Activated B cell treated with CpG ODN at 0.5 μM for 24 hours (primary cell): ENCODE measurements at regions of chr16 and their contacts with region 1.

Region 1: DNA sequence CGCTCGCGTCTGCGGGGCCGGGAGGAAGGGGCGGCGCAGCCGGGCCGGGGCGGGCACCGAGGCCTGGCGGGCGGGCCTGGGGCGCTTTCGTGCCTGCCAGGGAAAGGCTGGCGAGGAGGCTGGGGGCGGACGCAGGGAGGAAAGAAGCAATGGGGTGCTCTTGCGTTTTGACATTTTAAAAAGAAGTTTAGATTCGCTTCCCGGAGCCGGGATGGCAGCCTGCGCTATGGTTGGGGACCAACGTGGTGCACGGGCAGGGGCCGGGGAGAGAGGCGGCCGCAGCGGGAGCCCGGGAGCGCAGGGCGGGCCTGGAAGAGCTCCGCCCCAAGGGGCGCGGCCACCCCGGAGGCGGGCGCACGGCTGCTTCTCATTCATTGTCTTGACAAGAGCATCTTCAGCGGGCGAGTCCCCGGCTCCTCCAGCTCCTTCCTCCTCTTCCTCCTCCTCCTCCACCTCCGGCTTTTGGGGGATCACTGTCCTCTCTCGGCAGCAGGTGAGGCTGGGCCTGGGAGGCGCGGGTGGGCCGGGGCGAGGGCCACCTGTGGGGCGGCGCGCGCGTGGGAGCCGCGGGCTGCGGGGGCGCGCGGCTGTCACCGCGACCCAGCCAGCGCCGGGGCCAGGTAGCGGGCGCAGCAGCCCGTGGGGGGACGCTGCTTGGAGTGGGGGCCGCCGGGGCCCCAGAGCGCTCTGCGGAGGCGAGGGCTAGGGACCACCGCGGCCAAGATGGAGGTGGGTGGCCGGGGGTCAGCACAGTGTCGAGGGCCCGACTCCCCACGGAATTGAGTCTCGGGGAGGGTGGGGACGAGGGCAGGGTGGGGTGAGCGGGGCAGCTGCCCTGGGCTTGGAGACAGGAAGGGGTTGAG is at the start of gene CORO1A:
- DNase-seq: peak; percentile 86
- ATAC-seq: peak; percentile 60
- H3K4me3 Mint-ChIP-seq: peak within 1 kb of the TSS; percentile 98
- H3K27ac Mint-ChIP-seq: peak within 1 kb of the TSS; percentile 97
- H3K4me1 Mint-ChIP-seq: peaks cover 41% of the 10 kb centered on the region
- H3K27me3 Mint-ChIP-seq: no peaks in the 10 kb centered on the region
- CTCF ChIP-seq: no peak
- total RNA-seq, gene CORO1A: 1,030 and 1,060 TPM in 2 replicates

Region 2: GRCh38 chr16:30112197-30113030 is 71.0 kb before region 1 on chr16:
- CTCF ChIA-PET with region 1: interaction called, 3 read pairs
- POLR2A ChIA-PET with region 1: interaction called, 13 read pairs
- intact Hi-C with region 1: no loop called
- DNase-seq: peak; percentile 37
- ATAC-seq: peak; percentile 61
- H3K4me3 Mint-ChIP-seq: no peak overlapping the region
- H3K27ac Mint-ChIP-seq: no peak overlapping the region
- H3K4me1 Mint-ChIP-seq: peaks cover 5% of the 10 kb centered on the region
- H3K27me3 Mint-ChIP-seq: no peaks in the 10 kb centered on the region
- CTCF ChIP-seq: no peak

Region 3: GRCh38 chr16:30142672-30143346 is 40.7 kb before region 1 on chr16:
- CTCF ChIA-PET with region 1: interaction called, 6 read pairs
- POLR2A ChIA-PET with region 1: interaction called, 13 read pairs
- intact Hi-C with region 1: no loop called
- DNase-seq: no peak
- ATAC-seq: peak; percentile 57
- H3K4me3 Mint-ChIP-seq: no peak overlapping the region
- H3K27ac Mint-ChIP-seq: no peak overlapping the region
- H3K4me1 Mint-ChIP-seq: peaks cover 12% of the 10 kb centered on the region
- H3K27me3 Mint-ChIP-seq: no peaks in the 10 kb centered on the region
- CTCF ChIP-seq: no peak

Region 4: GRCh38 chr16:30370444-30371247 is 187.2 kb after region 1 on chr16 and contains the start of gene TBC1D10B:
- CTCF ChIA-PET with region 1: no interaction called
- POLR2A ChIA-PET with region 1: interaction called, 13 read pairs
- intact Hi-C with region 1: no loop called
- DNase-seq: peak; percentile 92
- ATAC-seq: peak; percentile 83
- H3K4me3 Mint-ChIP-seq: peak within 1 kb of the TSS; percentile 87
- H3K27ac Mint-ChIP-seq: peak within 1 kb of the TSS; percentile 86
- H3K4me1 Mint-ChIP-seq: peaks cover 52% of the 10 kb centered on the region
- H3K27me3 Mint-ChIP-seq: no peaks in the 10 kb centered on the region
- CTCF ChIP-seq: no peak
- total RNA-seq, gene TBC1D10B: 46.3 and 50.2 TPM in 2 replicates